ENCODE measurements at regions of chr17 and their contacts with region 1.

Region 1: GRCh38 chr17:77404812-77405581 is 264.2 kb downstream of the SEC14L1 start:
- DNase-seq: peak; percentile 94
- H3K4me3 Mint-ChIP-seq: peak overlapping the region; percentile 94
- H3K27ac Mint-ChIP-seq: peak overlapping the region; percentile 91
- H3K4me1 Mint-ChIP-seq: peaks cover 88% of the 10 kb centered on the region
- H3K27me3 Mint-ChIP-seq: no peaks in the 10 kb centered on the region

Region 2: GRCh38 chr17:77190576-77190975 is 214.4 kb before region 1 on chr17:
- CTCF ChIA-PET with region 1: no interaction called
- POLR2A ChIA-PET with region 1: no interaction called
- intact Hi-C with region 1: no loop called
- DNase-seq: no peak
- H3K4me3 Mint-ChIP-seq: no peak overlapping the region
- H3K27ac Mint-ChIP-seq: no peak overlapping the region
- H3K4me1 Mint-ChIP-seq: peaks cover 31% of the 10 kb centered on the region
- H3K27me3 Mint-ChIP-seq: no peaks in the 10 kb centered on the region

Region 3: GRCh38 chr17:77287432-77288071 is 117.4 kb before region 1 on chr17:
- CTCF ChIA-PET with region 1: no interaction called
- POLR2A ChIA-PET with region 1: no interaction called
- intact Hi-C with region 1: no loop called
- DNase-seq: no peak
- H3K4me3 Mint-ChIP-seq: no peak overlapping the region
- H3K27ac Mint-ChIP-seq: no peak overlapping the region
- H3K4me1 Mint-ChIP-seq: peaks cover under 1% of the 10 kb centered on the region
- H3K27me3 Mint-ChIP-seq: peaks cover 6% of the 10 kb centered on the region

Region 4: DNA sequence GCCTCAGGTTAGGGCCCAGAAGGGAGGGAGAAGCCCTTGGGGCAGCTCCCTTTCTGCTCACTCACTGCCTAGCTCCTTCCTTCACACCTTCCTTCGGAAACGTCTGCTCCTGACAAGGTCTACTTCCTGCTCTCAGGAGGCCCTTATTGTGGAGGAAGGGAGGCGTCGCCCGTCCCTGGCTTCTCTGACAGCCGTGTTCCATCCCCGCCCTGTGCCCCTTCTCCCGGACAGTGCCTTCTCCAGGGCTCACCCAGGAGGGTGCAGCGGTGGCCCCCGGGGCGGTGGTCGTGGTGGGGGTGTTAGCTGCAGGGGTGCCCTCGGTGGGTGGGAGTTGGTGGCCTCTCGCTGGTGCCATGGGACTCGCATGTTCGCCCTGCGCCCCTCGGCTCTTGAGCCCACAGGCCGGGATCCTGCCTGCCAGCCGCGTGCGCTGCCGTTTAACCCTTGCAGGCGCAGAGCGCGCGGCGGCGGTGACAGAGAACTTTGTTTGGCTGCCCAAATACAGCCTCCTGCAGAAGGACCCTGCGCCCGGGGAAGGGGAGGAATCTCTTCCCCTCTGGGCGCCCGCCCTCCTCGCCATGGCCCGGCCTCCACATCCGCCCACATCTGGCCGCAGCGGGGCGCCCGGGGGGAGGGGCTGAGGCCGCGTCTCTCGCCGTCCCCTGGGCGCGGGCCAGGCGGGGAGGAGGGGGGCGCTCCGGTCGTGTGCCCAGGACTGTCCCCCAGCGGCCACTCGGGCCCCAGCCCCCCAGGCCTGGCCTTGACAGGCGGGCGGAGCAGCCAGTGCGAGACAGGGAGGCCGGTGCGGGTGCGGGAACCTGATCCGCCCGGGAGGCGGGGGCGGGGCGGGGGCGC is 32.3 kb before region 1 on chr17:
- CTCF ChIA-PET with region 1: interaction called, 30 read pairs
- POLR2A ChIA-PET with region 1: interaction called, 9 read pairs
- intact Hi-C with region 1: loop called (anchors 2 kb)
- DNase-seq: peak; percentile 75
- H3K4me3 Mint-ChIP-seq: peak overlapping the region; percentile 73
- H3K27ac Mint-ChIP-seq: peak overlapping the region; percentile 73
- H3K4me1 Mint-ChIP-seq: peaks cover 62% of the 10 kb centered on the region
- H3K27me3 Mint-ChIP-seq: no peaks in the 10 kb centered on the region

Region 5: GRCh38 chr17:77420804-77421629 is 16.0 kb after region 1 on chr17:
- CTCF ChIA-PET with region 1: interaction called, 42 read pairs
- POLR2A ChIA-PET with region 1: interaction called, 6 read pairs
- intact Hi-C with region 1: no loop called
- DNase-seq: peak; percentile 65
- H3K4me3 Mint-ChIP-seq: peak overlapping the region; percentile 49
- H3K27ac Mint-ChIP-seq: peak overlapping the region; percentile 69
- H3K4me1 Mint-ChIP-seq: peaks cover 48% of the 10 kb centered on the region
- H3K27me3 Mint-ChIP-seq: no peaks in the 10 kb centered on the region

Region 6: DNA sequence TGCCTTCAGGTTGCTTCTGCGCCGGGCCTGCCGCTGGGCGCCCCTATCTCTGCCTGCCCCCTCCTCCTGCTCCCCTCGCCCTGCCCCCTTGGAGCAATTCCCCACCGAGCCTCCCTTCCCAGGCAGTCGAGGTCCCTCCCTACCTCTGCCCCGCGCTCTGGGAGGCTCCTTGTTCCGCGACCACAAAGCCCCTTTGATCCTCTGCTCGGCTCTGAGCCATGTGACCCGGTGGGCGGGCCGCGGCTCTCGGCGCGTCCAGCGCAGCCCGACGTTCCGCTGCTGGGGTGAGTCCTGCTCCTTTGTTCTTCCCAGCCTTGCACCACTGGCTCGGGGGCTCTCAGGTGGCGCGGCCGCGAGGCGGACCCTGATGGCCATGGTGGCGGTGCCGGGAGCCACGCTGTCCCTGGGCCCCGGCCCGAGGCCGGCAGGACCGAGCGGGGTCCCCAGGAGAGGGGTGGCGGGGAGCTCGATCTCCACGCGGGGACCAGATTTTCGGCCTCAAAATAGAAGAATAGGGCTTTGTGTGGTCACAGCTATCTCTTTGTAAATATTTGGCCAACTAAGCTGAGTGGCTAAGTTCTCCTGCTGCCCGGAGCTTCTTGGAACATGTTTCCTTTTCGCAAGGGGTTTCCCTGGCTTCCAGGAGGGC is 46.4 kb after region 1 on chr17:
- CTCF ChIA-PET with region 1: interaction called, 25 read pairs
- POLR2A ChIA-PET with region 1: interaction called, 13 read pairs
- intact Hi-C with region 1: loop called (anchors 2 kb)
- DNase-seq: peak; percentile 83
- H3K4me3 Mint-ChIP-seq: peak overlapping the region; percentile 91
- H3K27ac Mint-ChIP-seq: peak overlapping the region; percentile 100
- H3K4me1 Mint-ChIP-seq: peaks cover 41% of the 10 kb centered on the region
- H3K27me3 Mint-ChIP-seq: no peaks in the 10 kb centered on the region

Region 7: GRCh38 chr17:77471984-77472461 is 67.0 kb after region 1 on chr17:
- CTCF ChIA-PET with region 1: interaction called, 26 read pairs
- POLR2A ChIA-PET with region 1: no interaction called
- intact Hi-C with region 1: loop called (anchors 2 kb)
- DNase-seq: peak; percentile 32
- H3K4me3 Mint-ChIP-seq: peak overlapping the region; percentile 62
- H3K27ac Mint-ChIP-seq: peak overlapping the region; percentile 86
- H3K4me1 Mint-ChIP-seq: peaks cover 97% of the 10 kb centered on the region
- H3K27me3 Mint-ChIP-seq: no peaks in the 10 kb centered on the region

Region 8: DNA sequence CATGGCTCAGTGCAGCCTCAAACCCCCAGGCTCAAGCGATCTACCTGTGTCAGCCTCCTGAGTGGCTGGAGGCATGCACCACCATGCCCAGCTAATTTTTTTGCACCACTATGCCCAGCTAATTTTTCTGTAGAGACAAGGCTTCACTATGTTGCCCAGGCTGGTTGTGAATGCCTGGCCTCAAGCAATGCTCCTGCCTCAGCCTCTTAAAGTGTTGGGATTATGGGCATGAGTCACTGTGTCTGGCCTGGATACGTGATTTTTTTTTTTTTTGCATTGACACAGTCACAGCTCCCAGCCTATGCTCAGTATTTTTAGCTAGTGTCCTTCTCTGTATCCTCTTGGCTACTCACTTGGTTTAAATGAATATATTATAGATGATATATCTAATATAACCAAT is 176.5 kb after region 1 on chr17:
- CTCF ChIA-PET with region 1: no interaction called
- POLR2A ChIA-PET with region 1: no interaction called
- intact Hi-C with region 1: no loop called
- DNase-seq: no peak
- H3K4me3 Mint-ChIP-seq: no peak overlapping the region
- H3K27ac Mint-ChIP-seq: no peak overlapping the region
- H3K4me1 Mint-ChIP-seq: no peaks in the 10 kb centered on the region
- H3K27me3 Mint-ChIP-seq: peaks cover 1% of the 10 kb centered on the region